Colonic mucosa (tissue), 4 donors: ENCODE measurements at regions of chr3 and their contacts with region 1.

Region 1: DNA sequence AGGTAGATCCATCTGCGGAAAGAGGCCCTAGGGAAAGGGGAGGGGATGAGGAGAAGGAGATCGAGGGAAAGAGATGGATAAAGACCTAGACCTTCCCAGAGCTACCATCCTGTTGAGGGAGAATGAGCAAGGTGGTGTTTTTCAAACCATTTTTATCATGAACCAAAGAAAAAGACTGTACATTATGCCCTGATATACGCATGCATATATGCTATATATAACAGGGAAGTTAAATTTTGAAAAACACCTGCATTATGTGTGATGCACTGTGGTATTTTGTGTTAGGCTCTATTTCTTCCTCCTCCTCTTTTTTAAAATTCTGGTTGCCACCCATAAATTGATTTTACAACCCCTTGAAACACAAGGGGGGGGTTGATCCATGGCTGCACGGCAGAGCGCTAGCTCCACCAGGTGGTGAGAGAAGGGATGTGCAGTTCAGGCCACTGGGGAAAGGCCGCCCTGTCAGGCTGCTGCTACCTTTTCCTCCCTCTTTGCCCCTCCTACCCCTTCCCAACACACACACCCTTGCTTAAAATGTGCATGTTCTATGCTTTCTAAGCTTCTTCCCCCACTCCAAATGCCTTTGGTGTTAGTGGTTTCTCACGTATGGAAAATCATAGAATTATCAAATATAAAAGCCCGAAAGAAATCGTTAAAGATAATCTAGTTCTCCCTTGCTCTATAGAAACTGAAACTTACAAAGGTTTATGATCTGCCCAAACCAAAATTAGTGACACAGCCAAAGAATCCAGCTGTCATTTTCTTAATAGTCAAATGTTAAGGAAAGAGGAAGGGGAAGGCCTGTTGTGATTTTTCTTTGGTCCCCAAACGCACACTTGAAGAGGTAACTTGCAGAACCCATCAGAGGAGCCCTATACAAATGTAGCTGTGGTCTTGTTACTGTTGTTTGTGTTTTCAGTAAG is 262.0 kb upstream of the UMPS start:
- DNase-seq: peak; percentile 60
- H3K4me3 ChIP-seq: no peak overlapping the region
- H3K27ac ChIP-seq: no peak overlapping the region
- H3K4me1 ChIP-seq: no peaks in the 10 kb centered on the region
- H3K27me3 ChIP-seq: no peaks in the 10 kb centered on the region
- CTCF ChIP-seq: peak; percentile 93

Region 2: GRCh38 chr3:124026516-124026915 is 441.7 kb before region 1 on chr3:
- intact Hi-C with region 1: loop called (anchors 10 kb)
- DNase-seq: no peak
- H3K4me3 ChIP-seq: no peak overlapping the region
- H3K27ac ChIP-seq: no peak overlapping the region
- H3K4me1 ChIP-seq: no peaks in the 10 kb centered on the region
- H3K27me3 ChIP-seq: no peaks in the 10 kb centered on the region
- CTCF ChIP-seq: no peak

Region 3: GRCh38 chr3:124351430-124352148 is 116.7 kb before region 1 on chr3:
- intact Hi-C with region 1: loop called (anchors 2 kb)
- DNase-seq: peak; percentile 34
- H3K4me3 ChIP-seq: no peak overlapping the region
- H3K27ac ChIP-seq: no peak overlapping the region
- H3K4me1 ChIP-seq: no peaks in the 10 kb centered on the region
- H3K27me3 ChIP-seq: no peaks in the 10 kb centered on the region
- CTCF ChIP-seq: peak; percentile 50

Region 4: GRCh38 chr3:124786441-124787241 is 318.4 kb after region 1 on chr3:
- intact Hi-C with region 1: no loop called
- DNase-seq: peak; percentile 41
- H3K4me3 ChIP-seq: no peak overlapping the region
- H3K27ac ChIP-seq: peak overlapping the region; percentile 11
- H3K4me1 ChIP-seq: peaks cover 2% of the 10 kb centered on the region
- H3K27me3 ChIP-seq: no peaks in the 10 kb centered on the region
- CTCF ChIP-seq: no peak